Naive thymus-derived CD4-positive, alpha-beta T cell (primary cell): ENCODE measurements at regions of chr14 and their contacts with region 1.

Region 1: GRCh38 chr14:20682435-20683124 is 1.8 kb upstream of the RNASE4 start:
- DNase-seq: peak; percentile 63 to 83 (median 79)
- ATAC-seq: peak; percentile 75
- H3K4me3 ChIP-seq: peak overlapping the region; percentile 98
- H3K4me3 Mint-ChIP-seq: no peak overlapping the region
- H3K27ac ChIP-seq: peak overlapping the region; percentile 91
- H3K27ac Mint-ChIP-seq: no peak overlapping the region
- H3K4me1 ChIP-seq: peaks cover 18 to 24% of the 10 kb centered on the region in 2 donors
- H3K4me1 Mint-ChIP-seq: peaks cover 14 to 35% (median 32%) of the 10 kb centered on the region in 7 donors
- H3K27me3 ChIP-seq: no peaks in the 10 kb centered on the region
- H3K27me3 Mint-ChIP-seq: no peaks in the 10 kb centered on the region

Region 2: GRCh38 chr14:20343092-20343861 is 339.3 kb before region 1 on chr14 and contains the start of gene PARP2:
- CTCF ChIA-PET with region 1: interaction called, 7 read pairs
- POLR2A ChIA-PET with region 1: interaction called, 40 read pairs
- intact Hi-C with region 1: loop called (anchors 1 kb)
- DNase-seq: peak; percentile 82 to 94 (median 93)
- ATAC-seq: peak; percentile 86
- H3K4me3 ChIP-seq: peak within 1 kb of the TSS; percentile 74
- H3K4me3 Mint-ChIP-seq: peak within 1 kb of the TSS; percentile 82 to 99 (median 95)
- H3K27ac ChIP-seq: peak within 1 kb of the TSS; percentile 91
- H3K27ac Mint-ChIP-seq: peak within 1 kb of the TSS; percentile 91 to 98 (median 97)
- H3K4me1 ChIP-seq: peaks cover 4 to 5% of the 10 kb centered on the region in 2 donors
- H3K4me1 Mint-ChIP-seq: peaks cover 6 to 27% (median 18%) of the 10 kb centered on the region in 7 donors
- H3K27me3 ChIP-seq: no peaks in the 10 kb centered on the region
- H3K27me3 Mint-ChIP-seq: peaks cover 0 to 7% (median 0%) of the 10 kb centered on the region in 5 donors
- total RNA-seq, gene PARP2: 15.3 to 24.5 (median 21.3) TPM

Region 3: DNA sequence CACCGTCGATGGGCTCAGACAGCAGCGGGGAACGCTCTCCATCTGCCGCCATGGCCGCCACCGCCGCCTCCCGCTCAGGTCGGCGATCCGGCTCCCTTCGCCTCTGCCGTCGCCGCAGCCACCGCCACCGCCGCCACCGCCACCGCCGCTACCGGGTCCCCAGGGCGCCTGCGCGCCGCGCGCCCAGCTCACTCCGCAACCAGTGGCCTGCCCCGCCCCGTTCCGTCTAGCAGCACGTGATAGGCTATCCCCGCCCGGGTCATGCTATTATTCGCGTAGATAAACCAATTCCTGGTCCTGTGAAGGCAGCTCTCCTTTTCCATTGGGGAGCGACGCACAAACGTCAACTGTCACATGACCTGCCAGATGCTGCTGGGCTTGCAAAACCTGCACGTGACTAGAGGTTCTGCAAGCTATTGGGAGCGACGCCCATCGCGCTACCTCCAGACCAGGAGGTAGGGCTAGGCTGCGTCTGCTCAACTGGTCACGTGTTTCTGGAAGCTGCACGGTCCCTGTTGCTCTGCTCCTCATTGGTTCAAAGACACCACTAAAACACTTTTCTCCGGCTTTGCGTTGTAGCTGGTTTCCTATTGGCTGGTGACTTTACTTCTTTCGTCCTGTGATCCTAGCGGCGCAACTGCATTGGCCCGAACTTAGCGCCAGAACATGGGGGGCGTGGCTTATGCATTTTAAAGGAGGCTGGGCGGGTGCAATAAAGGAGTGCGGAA is 221.1 kb before region 1 on chr14 and contains the start of gene PIP4P1:
- CTCF ChIA-PET with region 1: no interaction called
- POLR2A ChIA-PET with region 1: interaction called, 38 read pairs
- intact Hi-C with region 1: loop called in 1 of 2 experiments (anchors 1 kb)
- DNase-seq: peak; percentile 95 to 100 (median 99)
- ATAC-seq: peak; percentile 92
- H3K4me3 ChIP-seq: peak within 1 kb of the TSS; percentile 83
- H3K4me3 Mint-ChIP-seq: peak within 1 kb of the TSS; percentile 81 to 97 (median 92)
- H3K27ac ChIP-seq: peak within 1 kb of the TSS; percentile 96
- H3K27ac Mint-ChIP-seq: peak within 1 kb of the TSS; percentile 88 to 99 (median 92)
- H3K4me1 ChIP-seq: peaks cover 20 to 21% of the 10 kb centered on the region in 2 donors
- H3K4me1 Mint-ChIP-seq: peaks cover 18 to 36% (median 32%) of the 10 kb centered on the region in 7 donors
- H3K27me3 ChIP-seq: no peaks in the 10 kb centered on the region
- H3K27me3 Mint-ChIP-seq: peaks cover 0 to 2% (median 0%) of the 10 kb centered on the region in 5 donors
- total RNA-seq, gene PIP4P1: 34.9 to 87.1 (median 74.2) TPM

Region 4: GRCh38 chr14:20662968-20663732 is 19.4 kb before region 1 on chr14:
- CTCF ChIA-PET with region 1: interaction called, 18 read pairs
- POLR2A ChIA-PET with region 1: interaction called, 27 read pairs
- intact Hi-C with region 1: loop called (anchors 1 kb)
- DNase-seq: peak; percentile 49 to 77 (median 66)
- ATAC-seq: peak; percentile 91
- H3K4me3 ChIP-seq: peak overlapping the region; percentile 59
- H3K4me3 Mint-ChIP-seq: peak overlapping the region; percentile 72 to 86 (median 79)
- H3K27ac ChIP-seq: no peak overlapping the region
- H3K27ac Mint-ChIP-seq: peak overlapping the region in 8 of 9 donors; percentile 18 to 74 (median 39)
- H3K4me1 ChIP-seq: peaks cover 3 to 17% of the 10 kb centered on the region in 2 donors
- H3K4me1 Mint-ChIP-seq: peaks cover 23 to 53% (median 25%) of the 10 kb centered on the region in 7 donors
- H3K27me3 ChIP-seq: no peaks in the 10 kb centered on the region
- H3K27me3 Mint-ChIP-seq: peaks cover 5 to 23% (median 19%) of the 10 kb centered on the region in 5 donors

Region 5: GRCh38 chr14:21092273-21093011 is 409.9 kb after region 1 on chr14:
- CTCF ChIA-PET with region 1: no interaction called
- POLR2A ChIA-PET with region 1: no interaction called
- intact Hi-C with region 1: loop called in 1 of 2 experiments (anchors 5 kb)
- DNase-seq: peak; percentile 82 to 98 (median 93)
- ATAC-seq: peak; percentile 90
- H3K4me3 ChIP-seq: no peak overlapping the region
- H3K4me3 Mint-ChIP-seq: peak overlapping the region in 1 of 10 donors; percentile 6
- H3K27ac ChIP-seq: no peak overlapping the region
- H3K27ac Mint-ChIP-seq: peak overlapping the region in 8 of 9 donors; percentile 17 to 88 (median 78)
- H3K4me1 ChIP-seq: peaks cover 6 to 14% of the 10 kb centered on the region in 2 donors
- H3K4me1 Mint-ChIP-seq: peaks cover 15 to 37% (median 27%) of the 10 kb centered on the region in 7 donors
- H3K27me3 ChIP-seq: no peaks in the 10 kb centered on the region
- H3K27me3 Mint-ChIP-seq: peaks cover 0 to 17% (median 0%) of the 10 kb centered on the region in 5 donors